ENCODE measurements at regions of chr6 and their contacts with region 1.

Region 1: GRCh38 chr6:13336553-13336952 is 8.2 kb upstream of the TBC1D7 start:
- DNase-seq: peak; percentile 58
- H3K4me3 Mint-ChIP-seq: no peak overlapping the region
- H3K27ac Mint-ChIP-seq: no peak overlapping the region
- H3K4me1 Mint-ChIP-seq: peaks cover 10% of the 10 kb centered on the region
- H3K27me3 Mint-ChIP-seq: peaks cover 16% of the 10 kb centered on the region
- CTCF ChIP-seq: peak; percentile 61

Region 2: GRCh38 chr6:13212096-13212495 is 124.5 kb before region 1 on chr6:
- CTCF ChIA-PET with region 1: no interaction called
- intact Hi-C with region 1: no loop called
- DNase-seq: no peak
- H3K4me3 Mint-ChIP-seq: no peak overlapping the region
- H3K27ac Mint-ChIP-seq: no peak overlapping the region
- H3K4me1 Mint-ChIP-seq: no peaks in the 10 kb centered on the region
- H3K27me3 Mint-ChIP-seq: peaks cover 30% of the 10 kb centered on the region
- CTCF ChIP-seq: no peak

Region 3: GRCh38 chr6:13229205-13230085 is 107.1 kb before region 1 on chr6:
- CTCF ChIA-PET with region 1: no interaction called
- intact Hi-C with region 1: loop called (anchors 10 kb)
- DNase-seq: peak; percentile 38
- H3K4me3 Mint-ChIP-seq: no peak overlapping the region
- H3K27ac Mint-ChIP-seq: no peak overlapping the region
- H3K4me1 Mint-ChIP-seq: no peaks in the 10 kb centered on the region
- H3K27me3 Mint-ChIP-seq: peaks cover 76% of the 10 kb centered on the region
- CTCF ChIP-seq: peak; percentile 20

Region 4: GRCh38 chr6:13538084-13538483 is 201.5 kb after region 1 on chr6:
- CTCF ChIA-PET with region 1: interaction called, 3 read pairs
- intact Hi-C with region 1: loop called (anchors 1 kb)
- DNase-seq: no peak
- H3K4me3 Mint-ChIP-seq: no peak overlapping the region
- H3K27ac Mint-ChIP-seq: no peak overlapping the region
- H3K4me1 Mint-ChIP-seq: no peaks in the 10 kb centered on the region
- H3K27me3 Mint-ChIP-seq: no peaks in the 10 kb centered on the region
- CTCF ChIP-seq: no peak

Region 5: GRCh38 chr6:13574149-13574570 is 237.6 kb after region 1 on chr6:
- CTCF ChIA-PET with region 1: interaction called, 7 read pairs
- intact Hi-C with region 1: loop called (anchors 1 kb)
- DNase-seq: peak; percentile 91
- H3K4me3 Mint-ChIP-seq: peak overlapping the region; percentile 97
- H3K27ac Mint-ChIP-seq: peak overlapping the region; percentile 84
- H3K4me1 Mint-ChIP-seq: no peaks in the 10 kb centered on the region
- H3K27me3 Mint-ChIP-seq: no peaks in the 10 kb centered on the region
- CTCF ChIP-seq: no peak

Measured in Calu3 (cell line).